Right lobe of liver (tissue), 6 donors: ENCODE measurements at regions of chr17 and their contacts with region 1.

Region 1: GRCh38 chr17:55527540-55528118 is 16.4 kb upstream of the SMIM36 start:
- DNase-seq: peak in 1 of 3 donors; percentile 51
- ATAC-seq: peak; percentile 50 to 74 (median 62)
- H3K4me3 ChIP-seq: no peak overlapping the region
- H3K27ac ChIP-seq: peak overlapping the region in 1 of 3 donors; percentile 10
- H3K4me1 ChIP-seq: peaks cover 0 to 33% (median 15%) of the 10 kb centered on the region in 4 donors
- H3K27me3 ChIP-seq: no peaks in the 10 kb centered on the region
- CTCF ChIP-seq: peak; percentile 69 to 82 (median 76)
- POLR2A ChIP-seq: no peak

Region 2: DNA sequence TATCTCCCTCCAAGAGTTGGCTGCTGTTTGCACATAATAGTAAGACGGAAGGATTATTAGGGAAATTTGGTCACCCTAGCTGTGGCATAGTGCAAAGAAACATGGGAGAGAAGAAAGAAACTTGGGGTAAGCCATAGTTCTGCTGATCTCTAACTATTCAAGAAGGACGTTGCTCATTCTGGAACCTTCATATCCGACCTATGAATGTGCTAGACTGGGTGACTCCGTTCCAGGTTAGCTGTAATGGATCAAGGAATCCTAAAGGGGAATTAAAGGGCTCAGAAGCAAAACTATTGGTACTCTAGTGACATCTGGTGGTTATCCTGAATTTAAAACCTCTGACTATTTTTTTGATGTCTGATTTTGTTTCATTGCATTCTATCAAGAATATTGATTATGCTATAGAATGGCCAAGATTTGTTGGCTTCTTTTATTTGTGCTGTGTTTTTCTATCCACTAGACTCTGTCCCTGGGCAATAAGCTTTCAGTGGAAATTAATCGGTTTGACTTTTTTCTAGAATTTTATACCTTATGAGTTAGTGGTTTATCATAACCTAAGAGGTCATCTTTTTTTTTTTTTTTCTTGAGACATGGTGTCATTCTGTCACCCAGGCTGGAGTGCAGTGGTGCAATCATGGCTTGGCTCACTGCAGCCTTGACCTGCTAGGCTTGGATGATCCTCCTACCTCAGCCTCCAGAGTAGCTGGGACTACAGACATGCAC is 242.7 kb after region 1 on chr17:
- intact Hi-C with region 1: loop called in 1 of 2 experiments (anchors 10 kb)
- DNase-seq: no peak
- ATAC-seq: peak; percentile 83 to 91 (median 86)
- H3K4me3 ChIP-seq: no peak overlapping the region
- H3K27ac ChIP-seq: peak overlapping the region in 2 of 3 donors; percentile 15 to 19
- H3K4me1 ChIP-seq: peaks cover 0 to 13% (median 5%) of the 10 kb centered on the region in 4 donors
- H3K27me3 ChIP-seq: no peaks in the 10 kb centered on the region
- CTCF ChIP-seq: peak; percentile 64 to 83 (median 66)
- POLR2A ChIP-seq: no peak